IMR-90 (cell line): ENCODE measurements at regions of chr7 and their contacts with region 1.

Region 1: DNA sequence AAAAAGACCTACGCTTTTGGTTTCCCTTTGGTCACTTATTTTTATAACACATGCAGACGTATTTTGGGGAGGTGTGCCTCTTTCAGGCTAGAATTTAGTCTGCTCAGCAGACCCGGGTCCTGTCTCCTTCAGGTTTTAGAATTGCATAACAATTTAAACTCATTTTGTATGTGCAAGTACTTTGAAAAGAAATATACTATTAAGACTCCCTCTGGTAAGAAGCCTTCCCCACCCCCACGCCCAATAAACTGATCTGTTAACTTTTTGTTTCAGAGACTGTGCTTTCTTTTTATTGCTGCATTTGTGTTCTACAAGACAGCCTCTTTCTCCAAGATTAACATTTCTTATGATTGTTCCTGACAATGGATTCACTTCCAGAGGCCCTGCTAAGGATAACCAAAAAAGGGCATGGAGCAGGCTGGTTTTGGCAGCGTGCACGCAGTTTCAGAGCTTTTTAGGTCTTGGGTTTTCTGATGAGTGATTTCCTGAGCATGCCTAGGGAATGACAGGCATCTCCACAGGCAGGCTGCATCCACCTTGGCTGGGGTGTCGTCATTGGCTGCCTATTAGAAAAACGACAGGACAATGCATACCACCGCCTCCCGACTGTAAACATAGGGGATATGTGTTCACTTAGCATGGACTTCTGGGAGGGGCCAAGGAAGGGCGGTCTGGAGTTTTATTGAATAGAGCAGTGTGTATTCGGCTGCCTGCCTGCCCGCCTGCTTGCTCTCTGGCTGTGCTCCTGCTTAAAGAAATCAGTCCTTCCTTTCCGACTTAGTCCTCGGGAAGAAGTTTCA is at the start of gene CALD1:
- DNase-seq: peak; percentile 99
- ATAC-seq: peak; percentile 91
- H3K4me3 ChIP-seq: peak within 1 kb of the TSS; percentile 66
- H3K27ac ChIP-seq: peak within 1 kb of the TSS; percentile 86
- H3K4me1 ChIP-seq: peaks cover 21% of the 10 kb centered on the region
- H3K27me3 ChIP-seq: no peaks in the 10 kb centered on the region
- CTCF ChIP-seq: no peak
- POLR2A ChIP-seq: peak; percentile 98
- RAD21 ChIP-seq: no peak; the same call in 1 of the 2 replicates
- total RNA-seq, gene CALD1: 487 and 532 TPM in 2 replicates

Region 2: DNA sequence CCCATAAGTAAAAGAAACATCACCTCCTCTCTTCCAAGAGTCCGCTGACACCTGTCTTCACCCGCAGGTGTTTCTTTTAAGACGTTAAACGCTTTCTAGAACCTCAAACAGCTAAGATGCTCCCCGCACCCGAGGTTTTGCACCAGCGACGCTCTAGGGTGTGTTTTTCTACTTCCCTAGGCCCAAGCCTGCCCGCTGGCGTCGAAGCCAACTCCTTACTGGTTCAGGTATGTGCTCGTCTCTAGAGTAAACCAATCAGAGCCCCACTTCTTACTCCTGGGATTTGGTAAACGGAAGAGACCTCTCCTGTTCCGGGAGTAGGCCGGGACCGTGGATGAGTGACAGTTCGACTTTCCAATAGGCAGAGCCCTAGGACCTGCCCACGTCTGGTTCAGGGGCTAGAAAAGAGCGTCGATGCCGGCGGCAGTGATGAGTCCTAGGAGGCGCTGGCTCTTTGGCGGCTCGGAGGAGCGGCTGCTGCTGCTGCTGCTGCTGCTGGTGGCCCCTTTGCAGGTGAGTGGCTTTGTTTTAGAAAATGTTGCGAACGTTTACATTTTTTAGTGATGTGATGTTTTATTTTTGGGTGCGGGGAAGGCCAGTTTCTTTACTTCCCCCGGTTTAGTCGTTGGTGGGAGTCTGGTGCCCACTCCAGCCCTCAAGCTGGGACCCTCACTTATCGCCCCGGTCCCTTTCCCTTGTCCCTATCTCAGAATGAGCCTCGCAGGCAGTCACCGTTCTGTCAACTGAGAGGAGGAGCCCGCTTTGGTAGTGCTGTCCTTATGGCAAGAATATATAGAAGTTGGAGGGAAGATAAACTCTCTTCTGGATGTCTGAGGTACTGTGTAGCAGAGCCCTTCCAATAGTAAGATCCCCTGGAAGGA is 132.5 kb before region 1 on chr7 and contains the start of gene BPGM:
- CTCF ChIA-PET with region 1: no interaction called
- POLR2A ChIA-PET with region 1: no interaction called
- dilution Hi-C with region 1: no loop called
- in situ Hi-C with region 1: no loop called
- intact Hi-C with region 1: loop called (anchors 5 kb)
- DNase-seq: peak; percentile 100
- ATAC-seq: peak; percentile 99
- H3K4me3 ChIP-seq: peak within 1 kb of the TSS; percentile 75
- H3K27ac ChIP-seq: peak within 1 kb of the TSS; percentile 81
- H3K4me1 ChIP-seq: peaks cover 7% of the 10 kb centered on the region
- H3K27me3 ChIP-seq: no peaks in the 10 kb centered on the region
- CTCF ChIP-seq: no peak; the same call in 1 of the 2 replicates
- POLR2A ChIP-seq: peak; percentile 100
- RAD21 ChIP-seq: peak; percentile 37
- total RNA-seq, gene BPGM: 18.8 and 32.8 TPM in 2 replicates

Region 3: DNA sequence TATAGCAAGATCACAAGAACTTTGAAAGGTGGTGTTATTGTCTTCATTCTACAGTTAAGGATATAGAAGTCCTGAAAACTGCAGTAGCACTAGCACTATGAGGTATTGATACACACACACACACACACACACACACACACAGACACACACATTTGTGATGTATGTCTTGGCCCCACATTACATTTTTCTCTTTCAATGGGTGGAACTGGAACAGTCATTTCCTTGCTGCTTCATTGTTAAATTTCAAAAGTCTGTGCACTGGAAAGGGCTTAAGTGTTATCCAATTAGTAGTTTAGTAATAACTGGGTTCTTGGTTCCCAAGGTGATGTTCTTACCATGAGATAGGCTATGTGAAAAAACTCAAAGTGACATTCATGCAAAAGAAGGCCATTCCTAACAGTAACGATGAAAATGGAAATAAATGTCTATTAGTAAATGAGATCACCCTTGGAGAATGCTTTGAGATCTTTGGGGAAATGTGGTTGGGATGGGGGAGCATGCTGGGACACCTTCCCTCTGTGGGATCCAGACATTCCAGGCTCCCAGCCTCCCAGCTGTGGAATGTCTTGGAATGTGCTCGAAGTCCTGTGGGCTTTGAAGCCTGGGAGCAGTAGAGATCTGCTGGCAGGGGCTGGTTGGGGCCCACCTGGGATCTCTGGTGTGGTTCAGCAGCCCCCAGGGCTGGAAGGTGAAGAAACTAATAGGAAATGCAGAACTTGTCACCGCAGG is 37.1 kb before region 1 on chr7:
- CTCF ChIA-PET with region 1: no interaction called
- POLR2A ChIA-PET with region 1: interaction called, 14 read pairs
- dilution Hi-C with region 1: no loop called
- in situ Hi-C with region 1: no loop called
- intact Hi-C with region 1: loop called (anchors 1 kb)
- DNase-seq: peak; percentile 82
- ATAC-seq: peak; percentile 67
- H3K4me3 ChIP-seq: no peak overlapping the region
- H3K27ac ChIP-seq: peak overlapping the region; percentile 95
- H3K4me1 ChIP-seq: peaks cover 19% of the 10 kb centered on the region
- H3K27me3 ChIP-seq: no peaks in the 10 kb centered on the region
- CTCF ChIP-seq: no peak
- POLR2A ChIP-seq: no peak
- RAD21 ChIP-seq: no peak

Region 4: GRCh38 chr7:134827889-134828288 is 48.7 kb after region 1 on chr7:
- CTCF ChIA-PET with region 1: no interaction called
- POLR2A ChIA-PET with region 1: no interaction called
- dilution Hi-C with region 1: no loop called
- in situ Hi-C with region 1: no loop called
- intact Hi-C with region 1: loop called (anchors 2 kb)
- DNase-seq: peak; percentile 84
- ATAC-seq: peak; percentile 60
- H3K4me3 ChIP-seq: no peak overlapping the region
- H3K27ac ChIP-seq: peak overlapping the region; percentile 39; the same call in 1 of the 2 replicates
- H3K4me1 ChIP-seq: peaks cover 30% of the 10 kb centered on the region
- H3K27me3 ChIP-seq: no peaks in the 10 kb centered on the region
- CTCF ChIP-seq: no peak
- POLR2A ChIP-seq: no peak; the same call in 1 of the 2 replicates
- RAD21 ChIP-seq: no peak

Region 5: GRCh38 chr7:134891262-134891695 is 112.1 kb after region 1 on chr7:
- CTCF ChIA-PET with region 1: no interaction called
- POLR2A ChIA-PET with region 1: no interaction called
- dilution Hi-C with region 1: no loop called
- in situ Hi-C with region 1: no loop called
- intact Hi-C with region 1: loop called (anchors 2 kb)
- DNase-seq: peak; percentile 92
- ATAC-seq: peak; percentile 72
- H3K4me3 ChIP-seq: peak overlapping the region; percentile 46
- H3K27ac ChIP-seq: peak overlapping the region; percentile 93
- H3K4me1 ChIP-seq: peaks cover 32% of the 10 kb centered on the region
- H3K27me3 ChIP-seq: no peaks in the 10 kb centered on the region
- CTCF ChIP-seq: no peak
- POLR2A ChIP-seq: no peak
- RAD21 ChIP-seq: no peak

Region 6: GRCh38 chr7:135320277-135320676 is 541.1 kb after region 1 on chr7:
- CTCF ChIA-PET with region 1: no interaction called
- POLR2A ChIA-PET with region 1: no interaction called
- dilution Hi-C with region 1: no loop called
- in situ Hi-C with region 1: no loop called
- intact Hi-C with region 1: no loop called
- DNase-seq: peak; percentile 86
- ATAC-seq: peak; percentile 80
- H3K4me3 ChIP-seq: no peak overlapping the region
- H3K27ac ChIP-seq: no peak overlapping the region
- H3K4me1 ChIP-seq: peaks cover 2% of the 10 kb centered on the region
- H3K27me3 ChIP-seq: peaks cover 11% of the 10 kb centered on the region
- CTCF ChIP-seq: no peak
- POLR2A ChIP-seq: no peak
- RAD21 ChIP-seq: no peak